ENCODE measurements at regions of chr16 and their contacts with region 1.

Region 1: DNA sequence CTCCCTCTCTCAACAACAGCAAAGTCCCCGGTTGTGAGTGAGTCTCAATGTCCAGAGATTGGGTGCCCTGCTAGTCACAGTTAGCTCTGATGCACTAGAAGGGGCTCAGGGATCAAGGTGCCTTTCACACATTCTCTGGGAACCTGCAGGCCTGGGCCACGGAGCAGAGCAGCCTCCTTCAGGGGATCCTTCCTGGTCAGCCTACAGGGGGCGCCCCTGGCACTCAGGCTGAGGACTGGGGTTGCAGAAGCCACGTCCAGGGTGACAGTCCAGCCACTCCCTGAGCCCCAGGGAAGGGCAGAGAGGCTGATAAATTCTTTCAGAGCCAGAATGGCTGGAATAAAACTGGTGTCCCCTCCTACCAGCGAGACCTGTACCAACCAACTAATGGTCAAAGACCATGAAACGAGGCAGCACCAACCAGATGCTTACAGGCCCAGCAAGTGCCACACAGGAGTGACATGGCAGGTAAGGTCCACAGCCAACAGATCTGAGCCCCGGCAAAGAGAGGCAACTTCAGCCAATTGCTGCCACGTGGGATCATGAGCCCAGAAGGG is 43.5 kb downstream of the ST3GAL2 start:
- DNase-seq: peak; percentile 65 to 75
- ATAC-seq: peak; percentile 78 to 93
- H3K4me3 ChIP-seq: no peak overlapping the region
- H3K27ac ChIP-seq: 0 out of 6 replicates have a peak overlapping the region, but pooled peaks have one; percentile 3 to 27
- H3K4me1 ChIP-seq: peaks cover 17% of the 10 kb centered on the region
- CTCF ChIP-seq: peak; percentile 75
- EP300 ChIP-seq: no peak
- POLR2A ChIP-seq: no peak
- RAD21 ChIP-seq: peak; percentile 85 to 88

Region 2: DNA sequence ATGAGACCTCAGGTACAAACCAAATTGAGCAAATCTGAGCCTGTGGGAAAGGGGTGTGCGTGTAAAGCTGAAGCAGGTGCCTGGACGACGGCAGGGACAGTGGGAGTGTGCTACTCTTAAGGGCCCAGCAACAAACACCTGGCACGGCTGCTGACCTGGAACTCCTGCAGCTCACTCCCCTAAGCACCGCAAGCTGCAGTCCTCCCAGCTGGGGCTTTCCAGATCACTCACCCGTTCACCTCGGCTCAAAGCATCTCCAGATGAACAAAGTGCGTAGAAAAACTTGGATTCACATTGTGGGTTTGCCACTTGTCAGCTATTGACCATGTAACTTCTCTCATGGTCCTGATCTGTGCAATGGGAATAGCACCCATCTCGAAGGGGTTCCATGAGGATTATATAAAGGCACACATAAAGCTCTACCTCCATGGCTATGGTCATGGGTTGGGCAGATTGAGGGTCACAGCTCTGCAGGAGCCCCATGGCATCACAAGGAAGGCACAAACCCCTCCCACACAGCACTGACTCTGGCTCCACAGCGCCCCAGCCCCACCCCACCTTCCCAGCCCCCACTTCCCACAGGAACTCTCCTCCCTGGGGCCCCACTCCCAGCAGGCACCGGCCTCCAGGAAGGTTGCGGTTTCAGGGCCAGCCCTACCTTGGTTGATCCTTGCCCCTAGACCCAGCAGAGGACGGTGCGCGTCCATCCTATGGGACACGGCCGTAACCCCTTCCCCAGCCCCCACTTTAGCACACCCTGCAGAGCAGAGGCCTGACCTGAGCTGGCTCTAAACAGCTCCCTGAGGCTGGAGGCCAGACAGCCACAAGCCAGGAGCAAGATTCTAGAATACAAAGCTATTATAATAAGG is 21.6 kb after region 1 on chr16:
- CTCF ChIA-PET with region 1: interaction called, 10 read pairs
- POLR2A ChIA-PET with region 1: interaction called, 7 read pairs
- DNase-seq: no peak
- ATAC-seq: no peak
- H3K4me3 ChIP-seq: no peak overlapping the region
- H3K27ac ChIP-seq: peak overlapping the region in 1 of 2 experiments; percentile 43; a peak in 2 of 6 replicates
- H3K4me1 ChIP-seq: peaks cover 16% of the 10 kb centered on the region; the same call in 1 of the 3 replicates
- CTCF ChIP-seq: no peak
- EP300 ChIP-seq: no peak
- POLR2A ChIP-seq: no peak
- RAD21 ChIP-seq: no peak

Region 3: GRCh38 chr16:70454222-70455034 is 59.0 kb after region 1 on chr16 and contains the start of gene FCSK:
- CTCF ChIA-PET with region 1: interaction called, 12 read pairs
- POLR2A ChIA-PET with region 1: no interaction called
- DNase-seq: peak; percentile 75 to 94
- ATAC-seq: peak; percentile 94 to 96
- H3K4me3 ChIP-seq: peak within 1 kb of the TSS; percentile 80
- H3K27ac ChIP-seq: peak within 1 kb of the TSS; percentile 96 to 97
- H3K4me1 ChIP-seq: peaks cover 12% of the 10 kb centered on the region; the same call in 2 of the 3 replicates
- CTCF ChIP-seq: peak; percentile 13; the same call in 1 of the 3 replicates
- EP300 ChIP-seq: no peak
- POLR2A ChIP-seq: peak; percentile 48
- RAD21 ChIP-seq: 0 out of 5 replicates have a peak, but pooled peaks of 1 of the 2 experiments have one; percentile 29
- polyA plus RNA-seq, gene FCSK: 5.7 and 9.3 TPM in 2 replicates

Region 4: DNA sequence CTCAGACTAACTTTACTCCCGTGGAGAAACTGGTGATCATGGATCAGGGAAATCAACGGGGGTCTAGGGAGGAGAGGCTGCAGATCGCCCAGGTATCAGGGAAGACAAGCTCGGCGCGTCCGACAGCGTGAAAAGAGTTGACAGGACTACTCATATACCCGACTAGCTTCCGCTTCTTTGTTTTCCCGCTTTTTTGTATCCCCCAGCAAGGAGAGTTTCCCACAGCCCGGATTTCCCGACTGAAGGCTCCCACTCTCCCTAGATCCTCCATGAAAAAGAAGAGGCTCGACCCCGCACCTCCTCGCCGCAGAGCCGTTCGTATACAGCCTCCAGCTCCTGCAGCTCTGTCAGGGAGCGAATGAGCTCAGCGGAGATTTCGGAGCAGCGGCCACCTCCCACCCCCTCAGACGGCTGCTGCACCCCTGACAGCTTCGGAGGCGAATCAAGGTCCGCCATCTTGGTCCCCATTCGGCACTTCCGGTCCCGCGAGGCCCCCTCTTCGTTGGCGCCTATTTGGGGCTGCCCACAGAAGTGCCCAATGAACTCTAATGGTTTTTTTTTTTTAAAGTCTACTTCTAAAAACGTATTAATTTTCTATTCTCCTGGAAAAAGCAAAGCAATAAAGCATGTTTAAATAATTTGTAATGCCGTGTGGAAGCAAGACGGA is 127.8 kb after region 1 on chr16 and contains the start of gene COG4:
- CTCF ChIA-PET with region 1: no interaction called
- POLR2A ChIA-PET with region 1: no interaction called
- DNase-seq: peak; percentile 88
- ATAC-seq: peak; percentile 90 to 91
- H3K4me3 ChIP-seq: peak within 1 kb of the TSS; percentile 75
- H3K27ac ChIP-seq: peak within 1 kb of the TSS; percentile 86 to 93
- H3K4me1 ChIP-seq: peaks cover 37% of the 10 kb centered on the region
- CTCF ChIP-seq: no peak
- EP300 ChIP-seq: no peak
- POLR2A ChIP-seq: peak; percentile 77
- RAD21 ChIP-seq: no peak
- polyA plus RNA-seq, gene COG4: 48.2 and 53.1 TPM in 2 replicates

Measured in A549 (cell line).